ENCODE measurements at regions of chr2 and their contacts with region 1.

Region 1: GRCh38 chr2:138922973-138923563 is 142.9 kb upstream of the NXPH2 start:
- DNase-seq: no peak
- H3K4me3 Mint-ChIP-seq: no peak overlapping the region
- H3K27ac Mint-ChIP-seq: no peak overlapping the region
- H3K4me1 Mint-ChIP-seq: no peaks in the 10 kb centered on the region
- H3K27me3 Mint-ChIP-seq: peaks cover 2% of the 10 kb centered on the region

Region 2: DNA sequence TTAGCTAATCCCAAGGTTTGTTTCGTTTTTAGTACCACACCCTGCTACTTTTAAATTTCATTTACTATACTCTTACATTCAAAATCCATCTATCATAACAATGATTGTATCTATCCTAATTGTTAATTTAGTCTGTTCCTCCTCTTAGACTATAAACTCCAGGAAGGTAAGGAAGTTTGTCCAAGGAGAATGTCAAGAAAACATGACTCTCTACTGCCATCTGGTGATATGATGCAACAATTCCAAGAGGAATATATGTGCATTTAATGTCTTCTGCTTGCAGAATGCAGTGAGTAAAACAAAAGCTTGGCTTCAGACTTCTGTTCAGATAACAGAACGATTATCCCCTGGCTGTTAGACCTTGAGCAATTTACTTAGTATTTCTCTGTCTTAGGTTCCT is 1940.6 kb after region 1 on chr2:
- CTCF ChIA-PET with region 1: no interaction called
- intact Hi-C with region 1: loop called (anchors 5 kb)
- DNase-seq: no peak
- H3K4me3 Mint-ChIP-seq: no peak overlapping the region
- H3K27ac Mint-ChIP-seq: no peak overlapping the region
- H3K4me1 Mint-ChIP-seq: no peaks in the 10 kb centered on the region
- H3K27me3 Mint-ChIP-seq: no peaks in the 10 kb centered on the region

Measured in activated naive CD4-positive, alpha-beta T cell treated with anti-CD3 and anti-CD28 coated beads for 36 hours (primary cell).